HCT116 (cell line): ENCODE measurements at regions of chr12 and their contacts with region 1.

Region 1: DNA sequence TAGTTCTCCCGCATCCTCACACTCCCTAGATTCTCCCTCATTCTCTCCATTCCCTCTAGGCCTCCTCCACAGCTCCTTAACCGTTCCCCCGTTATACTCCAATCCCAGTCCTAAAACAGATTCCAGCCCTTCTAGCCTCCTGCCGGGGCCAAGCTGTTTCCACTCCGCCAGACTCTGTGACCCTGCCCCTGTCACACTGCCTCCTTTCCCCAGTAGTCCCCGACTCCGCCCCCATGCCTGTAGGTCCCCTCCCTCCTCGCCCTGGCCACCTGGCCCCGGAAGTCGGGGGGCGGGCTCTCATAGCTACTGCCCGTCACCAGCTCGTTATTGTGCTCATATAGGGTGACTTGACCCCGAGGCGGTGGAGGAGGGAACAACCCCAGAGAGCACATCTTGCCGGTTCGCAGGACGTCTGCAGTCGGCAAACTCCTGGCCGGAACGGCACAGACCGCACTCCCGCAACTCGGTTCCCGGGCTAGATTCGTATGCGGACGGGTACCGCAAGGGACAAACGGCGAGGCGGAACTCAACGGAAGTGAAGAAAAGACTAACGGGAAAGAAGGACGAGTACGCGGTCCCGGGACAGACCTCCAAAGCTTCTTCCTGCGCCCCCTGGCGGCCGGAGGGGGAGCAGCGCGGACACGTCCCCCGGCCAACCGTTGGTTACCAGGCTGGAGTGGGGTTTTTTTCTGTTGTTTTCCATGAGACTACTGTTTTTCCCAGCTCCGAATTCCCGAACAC is at the start of gene AAAS:
- DNase-seq: peak; percentile 88
- ATAC-seq: peak; percentile 88
- H3K4me3 ChIP-seq: peak within 1 kb of the TSS; percentile 90
- H3K27ac ChIP-seq: peak within 1 kb of the TSS; percentile 89
- H3K4me1 ChIP-seq: peaks cover 25 to 47% of the 10 kb centered on the region in 2 experiments
- H3K27me3 ChIP-seq: no peaks in the 10 kb centered on the region
- CTCF ChIP-seq: peak; percentile 91 to 98 (median 96)
- POLR2A ChIP-seq: peak; percentile 93
- RAD21 ChIP-seq: peak; percentile 54
- total RNA-seq, gene AAAS: 87.9 TPM

Region 2: GRCh38 chr12:52310622-52311284 is 1010.5 kb before region 1 on chr12:
- CTCF ChIA-PET with region 1: no interaction called
- POLR2A ChIA-PET with region 1: no interaction called
- RAD21 ChIA-PET with region 1: no interaction called
- intact Hi-C with region 1: no loop called
- DNase-seq: no peak
- ATAC-seq: no peak
- H3K4me3 ChIP-seq: no peak overlapping the region
- H3K27ac ChIP-seq: no peak overlapping the region
- H3K4me1 ChIP-seq: peaks cover 10 to 36% of the 10 kb centered on the region in 2 experiments
- H3K27me3 ChIP-seq: no peaks in the 10 kb centered on the region
- CTCF ChIP-seq: no peak
- POLR2A ChIP-seq: no peak
- RAD21 ChIP-seq: no peak

Region 3: DNA sequence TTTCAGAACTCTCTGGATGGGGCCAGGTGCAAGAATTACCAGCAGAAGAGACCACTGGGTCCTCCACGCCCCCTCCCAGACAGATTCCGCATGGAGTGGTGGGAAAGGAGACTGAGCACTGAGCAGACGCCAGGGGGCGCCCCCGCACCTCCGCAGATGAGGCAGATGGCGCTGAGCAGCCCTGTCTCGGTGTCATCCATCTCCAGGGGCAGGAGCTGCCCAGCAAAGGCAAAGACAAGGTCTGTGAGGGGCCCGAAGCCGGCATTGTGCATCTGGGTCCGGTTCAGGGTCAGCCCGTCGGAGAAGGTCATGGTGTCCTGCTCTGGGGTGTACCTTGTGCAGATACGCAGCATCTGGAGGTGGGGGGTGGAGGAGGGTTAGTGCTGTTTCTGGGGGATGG is 107.9 kb before region 1 on chr12:
- CTCF ChIA-PET with region 1: interaction called, 43 read pairs
- POLR2A ChIA-PET with region 1: interaction called, 5 read pairs
- RAD21 ChIA-PET with region 1: interaction called, 6 to 8 read pairs
- intact Hi-C with region 1: no loop called
- DNase-seq: no peak
- ATAC-seq: peak; percentile 83
- H3K4me3 ChIP-seq: no peak overlapping the region
- H3K27ac ChIP-seq: no peak overlapping the region; the same call in 1 of the 2 replicates
- H3K4me1 ChIP-seq: peaks cover 20 to 24% of the 10 kb centered on the region in 2 experiments
- H3K27me3 ChIP-seq: no peaks in the 10 kb centered on the region
- CTCF ChIP-seq: peak in 2 of 3 experiments; percentile 89 to 97; a peak in 4 of 6 replicates
- POLR2A ChIP-seq: no peak
- RAD21 ChIP-seq: no peak

Region 4: DNA sequence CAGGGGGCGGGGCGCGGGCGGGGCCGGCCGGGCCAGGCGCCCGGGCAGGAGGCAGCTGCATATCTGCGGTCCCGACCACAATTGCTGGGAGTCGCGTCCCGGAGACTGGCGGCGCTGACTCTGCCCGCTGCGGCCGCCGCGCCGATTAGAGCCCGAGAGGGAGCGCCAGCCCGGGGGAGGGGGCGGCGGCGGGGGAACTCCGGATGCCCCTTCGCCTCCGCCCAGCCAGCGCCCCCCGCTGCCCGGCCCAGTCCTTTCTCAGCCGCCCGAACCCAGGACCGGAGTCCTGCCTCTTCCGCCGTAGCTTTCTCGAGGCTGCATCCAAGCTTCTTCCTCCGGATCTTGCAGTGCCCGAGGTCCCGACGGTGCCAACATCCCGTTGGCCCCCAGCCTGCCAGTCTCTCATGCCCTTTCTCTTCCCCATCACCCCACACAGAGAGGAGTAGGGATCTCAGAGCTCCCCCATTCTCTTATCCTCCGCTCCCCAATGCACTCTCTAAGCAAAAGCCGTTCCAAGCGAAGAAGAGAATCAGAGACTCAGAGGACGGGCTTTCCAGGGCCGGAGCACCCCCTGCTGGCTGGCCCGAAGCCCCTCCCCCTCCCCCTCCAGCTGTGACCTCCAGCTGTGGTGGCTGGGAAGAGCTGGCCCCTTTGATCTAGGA is 23.7 kb after region 1 on chr12:
- CTCF ChIA-PET with region 1: interaction called, 10 read pairs
- POLR2A ChIA-PET with region 1: interaction called, 9 read pairs
- RAD21 ChIA-PET with region 1: interaction called, 3 to 4 read pairs
- intact Hi-C with region 1: no loop called
- DNase-seq: no peak
- ATAC-seq: peak; percentile 81
- H3K4me3 ChIP-seq: peak overlapping the region; percentile 54 to 68
- H3K27ac ChIP-seq: peak overlapping the region; percentile 65
- H3K4me1 ChIP-seq: peaks cover 11 to 21% of the 10 kb centered on the region in 2 experiments; a peak in 3 of 4 replicates
- H3K27me3 ChIP-seq: no peaks in the 10 kb centered on the region
- CTCF ChIP-seq: peak; percentile 63 to 67 (median 65); a peak in 5 of 6 replicates
- POLR2A ChIP-seq: no peak
- RAD21 ChIP-seq: peak; percentile 71

Region 5: GRCh38 chr12:53419761-53420160 is 98.5 kb after region 1 on chr12:
- CTCF ChIA-PET with region 1: interaction called, 24 read pairs
- POLR2A ChIA-PET with region 1: interaction called, 17 read pairs
- RAD21 ChIA-PET with region 1: interaction called in 1 of 2 experiments, 7 read pairs
- intact Hi-C with region 1: no loop called
- DNase-seq: no peak
- ATAC-seq: no peak
- H3K4me3 ChIP-seq: no peak overlapping the region; a peak in 1 of 4 replicates
- H3K27ac ChIP-seq: peak overlapping the region; percentile 95; the same call in 1 of the 2 replicates
- H3K4me1 ChIP-seq: peaks cover 16 to 26% of the 10 kb centered on the region in 2 experiments
- H3K27me3 ChIP-seq: no peaks in the 10 kb centered on the region
- CTCF ChIP-seq: no peak
- POLR2A ChIP-seq: no peak
- RAD21 ChIP-seq: no peak

Region 6: DNA sequence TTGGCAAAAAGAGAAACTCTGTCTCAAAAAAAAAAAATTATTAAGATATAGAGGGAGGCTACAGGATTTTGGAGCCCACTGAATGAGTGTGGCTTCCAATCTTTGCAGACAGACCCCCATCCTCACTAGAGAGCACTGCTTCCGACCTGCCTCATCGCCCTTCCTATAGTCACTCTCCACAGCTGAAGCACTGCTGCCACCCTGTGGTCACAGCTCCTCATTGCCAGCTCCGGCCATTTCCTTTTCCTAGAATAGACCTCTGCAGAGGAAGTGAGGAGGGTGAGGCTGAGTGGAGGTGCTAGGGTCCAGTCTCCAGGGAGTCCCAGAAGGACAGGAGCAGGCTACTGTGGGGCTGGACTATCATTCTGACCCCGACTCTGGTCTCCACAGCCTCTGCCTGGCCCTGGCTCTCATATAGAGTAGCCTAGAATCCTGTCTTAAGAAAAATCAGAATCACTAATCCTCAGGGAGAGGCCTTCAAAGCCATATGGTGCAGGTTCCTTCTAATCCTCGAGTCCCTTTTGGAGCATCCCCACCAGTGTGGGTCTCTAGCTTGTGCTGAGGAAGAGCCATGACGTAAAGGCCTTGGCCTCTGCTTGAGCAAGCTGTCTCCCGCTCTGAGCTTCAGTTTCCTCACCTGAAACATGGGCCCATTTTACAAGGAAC is 187.4 kb after region 1 on chr12:
- CTCF ChIA-PET with region 1: interaction called, 15 read pairs
- POLR2A ChIA-PET with region 1: no interaction called
- RAD21 ChIA-PET with region 1: no interaction called
- intact Hi-C with region 1: loop called (anchors 1 kb)
- DNase-seq: no peak
- ATAC-seq: peak; percentile 98
- H3K4me3 ChIP-seq: no peak overlapping the region
- H3K27ac ChIP-seq: 0 out of 2 replicates have a peak overlapping the region, but pooled peaks have one; percentile 23
- H3K4me1 ChIP-seq: peaks cover 0 to 6% of the 10 kb centered on the region in 2 experiments; a peak in 1 of 4 replicates
- H3K27me3 ChIP-seq: no peaks in the 10 kb centered on the region
- CTCF ChIP-seq: peak in 2 of 3 experiments; percentile 94 to 95; a peak in 4 of 6 replicates
- POLR2A ChIP-seq: no peak
- RAD21 ChIP-seq: no peak

Region 7: DNA sequence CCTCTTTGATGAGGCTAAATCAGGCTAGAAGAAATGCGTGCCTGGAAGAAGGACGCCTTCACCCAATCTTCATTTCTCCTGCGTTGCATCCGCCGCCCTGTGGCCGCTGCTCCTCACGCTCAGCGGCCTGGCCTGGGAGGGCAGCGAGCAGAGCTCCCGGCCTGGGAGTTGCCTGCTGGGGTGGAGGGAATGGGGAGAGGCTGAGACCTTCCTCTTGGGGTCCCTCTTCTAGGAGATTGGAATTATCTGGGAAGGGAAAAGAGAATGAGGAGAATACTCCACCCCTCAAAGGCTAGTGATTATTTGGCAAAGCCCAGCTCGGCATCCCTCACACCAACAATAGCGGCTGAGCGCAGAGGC is 631.1 kb after region 1 on chr12:
- CTCF ChIA-PET with region 1: no interaction called
- POLR2A ChIA-PET with region 1: no interaction called
- RAD21 ChIA-PET with region 1: no interaction called
- intact Hi-C with region 1: no loop called
- DNase-seq: no peak
- ATAC-seq: no peak
- H3K4me3 ChIP-seq: no peak overlapping the region
- H3K27ac ChIP-seq: no peak overlapping the region
- H3K4me1 ChIP-seq: peaks cover 12 to 15% of the 10 kb centered on the region in 2 experiments
- H3K27me3 ChIP-seq: no peaks in the 10 kb centered on the region
- CTCF ChIP-seq: no peak
- POLR2A ChIP-seq: no peak
- RAD21 ChIP-seq: no peak